Naive thymus-derived CD4-positive, alpha-beta T cell (primary cell): ENCODE measurements at regions of chr10 and their contacts with region 1.

Region 1: GRCh38 chr10:14604181-14605142 is 170.2 kb downstream of the FAM107B start:
- DNase-seq: peak; percentile 56 to 82 (median 65)
- ATAC-seq: peak; percentile 90
- H3K4me3 ChIP-seq: peak overlapping the region; percentile 40
- H3K4me3 Mint-ChIP-seq: peak overlapping the region; percentile 86 to 99 (median 97)
- H3K27ac ChIP-seq: peak overlapping the region; percentile 73
- H3K27ac Mint-ChIP-seq: peak overlapping the region; percentile 57 to 99 (median 94)
- H3K4me1 ChIP-seq: peaks cover 29 to 31% of the 10 kb centered on the region in 2 donors
- H3K4me1 Mint-ChIP-seq: peaks cover 45 to 62% (median 57%) of the 10 kb centered on the region in 7 donors
- H3K27me3 ChIP-seq: no peaks in the 10 kb centered on the region
- H3K27me3 Mint-ChIP-seq: peaks cover 0 to 2% (median 0%) of the 10 kb centered on the region in 5 donors

Region 2: DNA sequence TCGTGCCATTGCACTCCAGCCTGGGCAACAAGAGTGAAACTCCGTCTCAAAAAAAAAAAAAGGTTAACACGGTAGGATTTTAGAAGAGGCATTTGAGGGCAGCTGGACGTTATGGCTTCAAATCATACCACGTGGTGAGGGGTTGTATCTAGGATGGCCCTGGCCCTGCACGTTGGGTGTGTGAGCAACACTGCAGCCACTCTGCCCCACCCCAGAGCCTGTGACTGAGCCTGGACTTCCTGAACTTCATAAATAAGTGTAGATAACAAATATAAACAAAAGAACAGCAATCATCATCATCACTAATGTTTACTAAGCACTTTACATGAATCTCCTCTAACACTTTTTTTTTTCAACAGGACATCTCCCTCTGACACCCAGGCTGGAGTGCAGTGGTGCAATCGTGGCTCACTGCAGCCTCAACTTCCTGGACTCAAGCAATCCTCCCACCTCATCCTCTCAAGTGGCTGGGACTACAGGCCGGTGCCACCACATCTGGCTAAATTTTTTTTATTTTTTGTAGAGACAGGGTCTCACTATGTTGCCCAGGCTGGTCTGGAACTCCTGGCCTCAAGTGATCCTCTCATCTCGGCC is 104.2 kb before region 1 on chr10:
- CTCF ChIA-PET with region 1: no interaction called
- POLR2A ChIA-PET with region 1: no interaction called
- intact Hi-C with region 1: loop called in 1 of 2 experiments (anchors 5 kb)
- DNase-seq: no peak
- ATAC-seq: no peak
- H3K4me3 ChIP-seq: no peak overlapping the region
- H3K4me3 Mint-ChIP-seq: no peak overlapping the region
- H3K27ac ChIP-seq: no peak overlapping the region
- H3K27ac Mint-ChIP-seq: peak overlapping the region in 4 of 9 donors; percentile 28 to 56 (median 40)
- H3K4me1 ChIP-seq: no peaks in the 10 kb centered on the region
- H3K4me1 Mint-ChIP-seq: peaks cover 4 to 15% (median 6%) of the 10 kb centered on the region in 7 donors
- H3K27me3 ChIP-seq: no peaks in the 10 kb centered on the region
- H3K27me3 Mint-ChIP-seq: peaks cover 0 to 12% (median 0%) of the 10 kb centered on the region in 5 donors

Region 3: GRCh38 chr10:14556285-14556956 is 48.0 kb before region 1 on chr10:
- CTCF ChIA-PET with region 1: no interaction called
- POLR2A ChIA-PET with region 1: interaction called, 3 read pairs
- intact Hi-C with region 1: loop called (anchors 1 kb)
- DNase-seq: no peak
- ATAC-seq: peak; percentile 47
- H3K4me3 ChIP-seq: no peak overlapping the region
- H3K4me3 Mint-ChIP-seq: peak overlapping the region; percentile 9 to 86 (median 73)
- H3K27ac ChIP-seq: peak overlapping the region; percentile 37
- H3K27ac Mint-ChIP-seq: peak overlapping the region; percentile 52 to 97 (median 93)
- H3K4me1 ChIP-seq: peaks cover 90 to 94% of the 10 kb centered on the region in 2 donors
- H3K4me1 Mint-ChIP-seq: peaks cover 84 to 100% (median 92%) of the 10 kb centered on the region in 7 donors
- H3K27me3 ChIP-seq: no peaks in the 10 kb centered on the region
- H3K27me3 Mint-ChIP-seq: no peaks in the 10 kb centered on the region

Region 4: DNA sequence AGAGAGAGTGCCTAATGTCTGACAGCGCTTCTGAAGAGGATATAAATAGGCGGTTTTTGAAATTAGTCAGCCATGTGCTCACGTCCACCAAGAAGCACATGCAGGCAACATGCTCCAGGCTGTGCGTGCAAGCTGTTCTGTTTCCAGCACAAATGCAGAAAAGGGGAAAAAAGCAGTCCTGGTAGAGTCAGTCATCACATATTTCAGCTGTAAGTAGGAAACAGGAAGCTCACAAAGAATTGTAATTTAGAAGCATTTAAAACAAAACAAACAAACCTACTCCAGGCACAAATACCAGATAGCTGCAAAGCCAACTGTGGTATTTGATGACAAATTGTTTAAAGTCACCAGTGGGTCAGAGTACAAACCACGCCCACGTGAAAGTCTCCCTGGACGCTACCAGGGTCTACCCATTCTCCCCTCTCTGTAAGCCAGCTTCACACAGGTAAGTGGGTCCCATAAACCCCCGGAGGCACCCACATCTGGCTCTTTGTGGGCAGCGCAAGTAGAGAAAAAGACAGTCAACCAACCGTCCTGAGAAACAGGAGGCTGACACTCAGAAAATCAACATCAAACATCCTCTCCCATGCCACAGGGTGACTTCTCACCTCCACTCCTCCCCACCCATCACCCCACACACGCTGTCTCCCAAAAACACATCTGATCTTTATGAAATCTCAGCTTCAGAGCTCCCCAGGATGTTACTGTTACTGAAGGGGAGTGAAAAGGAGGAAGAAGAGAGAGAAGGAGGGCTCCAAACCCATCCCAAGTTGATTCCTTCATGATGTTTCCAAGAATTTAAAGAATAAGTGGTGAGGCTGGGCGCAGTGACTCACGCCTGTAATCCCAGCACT is 16.2 kb before region 1 on chr10:
- CTCF ChIA-PET with region 1: interaction called, 3 read pairs
- POLR2A ChIA-PET with region 1: interaction called, 13 read pairs
- intact Hi-C with region 1: loop called (anchors 1 kb)
- DNase-seq: peak in 6 of 9 donors; percentile 24 to 60 (median 44)
- ATAC-seq: peak; percentile 20
- H3K4me3 ChIP-seq: peak overlapping the region; percentile 31
- H3K4me3 Mint-ChIP-seq: peak overlapping the region; percentile 76 to 88 (median 84)
- H3K27ac ChIP-seq: peak overlapping the region; percentile 83
- H3K27ac Mint-ChIP-seq: peak overlapping the region; percentile 96 to 100 (median 99)
- H3K4me1 ChIP-seq: peaks cover 73 to 76% of the 10 kb centered on the region in 2 donors
- H3K4me1 Mint-ChIP-seq: peaks cover 52 to 94% (median 93%) of the 10 kb centered on the region in 7 donors
- H3K27me3 ChIP-seq: no peaks in the 10 kb centered on the region
- H3K27me3 Mint-ChIP-seq: no peaks in the 10 kb centered on the region

Region 5: GRCh38 chr10:14659626-14660196 is 55.2 kb after region 1 on chr10:
- CTCF ChIA-PET with region 1: no interaction called
- POLR2A ChIA-PET with region 1: no interaction called
- intact Hi-C with region 1: loop called in 1 of 2 experiments (anchors 1 kb)
- DNase-seq: peak in 5 of 9 donors; percentile 14 to 75 (median 55)
- ATAC-seq: peak; percentile 87
- H3K4me3 ChIP-seq: peak overlapping the region; percentile 7
- H3K4me3 Mint-ChIP-seq: peak overlapping the region; percentile 52 to 79 (median 74)
- H3K27ac ChIP-seq: peak overlapping the region; percentile 62
- H3K27ac Mint-ChIP-seq: peak overlapping the region; percentile 74 to 97 (median 86)
- H3K4me1 ChIP-seq: peaks cover 24 to 34% of the 10 kb centered on the region in 2 donors
- H3K4me1 Mint-ChIP-seq: peaks cover 42 to 81% (median 57%) of the 10 kb centered on the region in 7 donors
- H3K27me3 ChIP-seq: no peaks in the 10 kb centered on the region
- H3K27me3 Mint-ChIP-seq: peaks cover 0 to 2% (median 0%) of the 10 kb centered on the region in 5 donors

Region 6: DNA sequence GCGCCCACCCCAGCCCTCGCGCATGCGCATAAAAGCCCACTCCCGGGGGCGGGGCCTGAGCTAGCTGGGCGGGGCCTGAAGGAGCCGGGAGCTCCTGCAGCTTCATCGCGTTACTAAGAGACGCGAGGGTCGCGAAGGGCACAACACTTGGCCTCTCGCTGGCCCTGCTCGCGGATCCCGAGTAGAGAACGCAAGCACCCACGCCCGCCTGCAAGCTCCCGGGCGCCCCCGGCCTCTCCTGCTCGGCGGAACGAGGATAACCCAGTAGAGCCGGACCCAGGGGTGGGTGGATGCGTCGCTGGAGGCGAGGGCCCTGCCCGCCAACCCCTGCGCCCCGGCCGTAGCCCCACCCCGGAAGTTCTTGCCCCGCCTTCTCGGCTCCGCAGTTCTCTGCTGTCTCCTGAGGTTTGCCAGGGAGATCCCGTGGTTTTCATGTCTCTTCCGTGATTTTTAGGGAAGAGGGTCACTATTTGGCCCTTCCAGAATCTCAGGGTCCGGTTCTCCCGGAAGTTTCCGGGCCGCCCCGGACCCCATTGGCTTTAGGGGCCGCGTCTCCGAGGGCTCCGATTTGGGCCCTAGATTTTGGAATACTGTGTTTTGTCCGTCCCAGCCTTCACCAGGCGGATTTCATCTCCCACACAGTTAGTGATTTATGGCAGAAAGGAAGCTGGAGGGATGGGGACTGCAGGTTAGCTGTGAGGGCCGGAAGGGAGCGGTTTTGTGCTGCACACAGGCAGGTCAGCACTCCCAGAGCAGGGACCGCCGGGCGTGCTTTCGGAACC is 355.0 kb after region 1 on chr10 and contains the start of gene MEIG1:
- CTCF ChIA-PET with region 1: no interaction called
- POLR2A ChIA-PET with region 1: no interaction called
- intact Hi-C with region 1: loop called (anchors 2 to 10 kb)
- DNase-seq: peak; percentile 82 to 99 (median 90)
- ATAC-seq: peak; percentile 93
- H3K4me3 ChIP-seq: peak within 1 kb of the TSS; percentile 97
- H3K4me3 Mint-ChIP-seq: peak within 1 kb of the TSS; percentile 91 to 99 (median 96)
- H3K27ac ChIP-seq: peak within 1 kb of the TSS; percentile 81
- H3K27ac Mint-ChIP-seq: peak within 1 kb of the TSS; percentile 93 to 98 (median 96)
- H3K4me1 ChIP-seq: peaks cover 8 to 10% of the 10 kb centered on the region in 2 donors
- H3K4me1 Mint-ChIP-seq: peaks cover 6 to 42% (median 34%) of the 10 kb centered on the region in 7 donors
- H3K27me3 ChIP-seq: no peaks in the 10 kb centered on the region
- H3K27me3 Mint-ChIP-seq: no peaks in the 10 kb centered on the region
- total RNA-seq, gene MEIG1: 1.2 to 1.9 TPM in 2 of 5 experiments, not detected in the others

Region 7: GRCh38 chr10:15472431-15473395 is 868.3 kb after region 1 on chr10:
- CTCF ChIA-PET with region 1: no interaction called
- POLR2A ChIA-PET with region 1: no interaction called
- intact Hi-C with region 1: no loop called
- DNase-seq: no peak
- ATAC-seq: no peak
- H3K4me3 ChIP-seq: no peak overlapping the region
- H3K4me3 Mint-ChIP-seq: no peak overlapping the region
- H3K27ac ChIP-seq: no peak overlapping the region
- H3K27ac Mint-ChIP-seq: no peak overlapping the region
- H3K4me1 ChIP-seq: no peaks in the 10 kb centered on the region
- H3K4me1 Mint-ChIP-seq: no peaks in the 10 kb centered on the region
- H3K27me3 ChIP-seq: no peaks in the 10 kb centered on the region
- H3K27me3 Mint-ChIP-seq: peaks cover 11 to 51% (median 41%) of the 10 kb centered on the region in 5 donors